Gastrocnemius medialis (tissue), 4 donors: ENCODE measurements at regions of chr9 and their contacts with region 1.

Region 1: GRCh38 chr9:122125158-122125508 is 32.0 kb upstream of the TTLL11 start:
- DNase-seq: peak; percentile 58 to 65
- ATAC-seq: peak; percentile 79 to 81
- H3K4me3 ChIP-seq: no peak overlapping the region
- H3K27ac ChIP-seq: no peak overlapping the region
- H3K4me1 ChIP-seq: peaks cover 0 to 8% of the 10 kb centered on the region in 2 donors
- H3K27me3 ChIP-seq: peaks cover 9 to 18% (median 14%) of the 10 kb centered on the region in 3 donors
- CTCF ChIP-seq: peak; percentile 92 to 97 (median 96)
- POLR2A ChIP-seq: no peak

Region 2: GRCh38 chr9:122070728-122071505 is 54.2 kb before region 1 on chr9:
- in situ Hi-C with region 1: no loop called
- intact Hi-C with region 1: loop called (anchors 2 kb)
- DNase-seq: peak in 1 of 2 donors; percentile 29
- ATAC-seq: peak; percentile 53 to 64
- H3K4me3 ChIP-seq: no peak overlapping the region
- H3K27ac ChIP-seq: peak overlapping the region in 1 of 4 donors; percentile 12
- H3K4me1 ChIP-seq: peaks cover 54 to 83% of the 10 kb centered on the region in 2 donors
- H3K27me3 ChIP-seq: no peaks in the 10 kb centered on the region
- CTCF ChIP-seq: peak in 1 of 5 experiments; percentile 20
- POLR2A ChIP-seq: no peak

Region 3: DNA sequence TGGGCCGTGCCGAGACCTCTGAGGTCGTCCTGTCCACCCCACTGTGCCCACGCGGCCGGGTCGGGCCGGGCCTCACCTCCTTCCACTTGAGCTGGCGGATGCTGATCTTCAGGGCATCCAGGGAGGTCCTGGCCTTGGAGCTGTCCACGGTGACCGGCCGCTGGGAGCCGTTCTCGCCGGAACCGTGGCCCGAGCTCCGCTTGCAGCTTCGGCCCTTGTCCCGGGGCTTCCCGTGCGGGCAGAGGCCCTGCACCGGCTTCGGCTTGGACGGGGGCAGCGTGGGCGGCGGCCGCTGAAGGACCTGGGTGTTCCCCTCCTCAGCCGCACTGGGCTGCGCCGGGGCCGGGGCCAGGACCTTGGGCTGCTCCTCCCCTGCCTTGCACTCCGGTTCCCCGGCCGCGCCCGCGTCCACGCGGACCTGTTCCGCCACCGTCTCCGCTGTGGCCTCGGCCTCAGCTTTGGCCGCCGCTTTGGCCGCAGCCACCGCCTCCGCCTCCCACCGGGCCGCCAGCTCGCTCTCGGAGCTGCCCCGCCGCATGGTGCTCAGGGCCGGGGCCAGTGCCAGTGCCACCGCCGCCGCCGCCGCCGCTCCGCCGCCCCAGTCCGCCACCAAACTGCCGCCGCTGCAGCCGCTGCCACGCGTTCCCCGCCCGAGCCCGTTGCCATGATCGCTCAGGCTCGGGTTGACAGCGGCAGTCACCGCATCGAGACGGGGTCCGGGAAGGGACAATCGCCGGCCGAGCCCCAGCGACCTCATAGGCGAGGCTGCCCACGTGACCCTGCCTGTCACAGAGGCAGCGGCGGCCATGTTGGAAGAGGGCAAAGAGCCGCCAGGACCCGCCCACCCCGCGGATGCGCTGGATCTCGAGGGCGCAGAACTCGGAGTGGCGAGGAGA is 32.3 kb before region 1 on chr9 and contains the start of gene TTLL11:
- in situ Hi-C with region 1: no loop called
- intact Hi-C with region 1: no loop called
- DNase-seq: peak; percentile 96
- ATAC-seq: peak; percentile 83 to 88
- H3K4me3 ChIP-seq: peak within 1 kb of the TSS; percentile 69 to 91 (median 78)
- H3K27ac ChIP-seq: peak within 1 kb of the TSS; percentile 84 to 94 (median 88)
- H3K4me1 ChIP-seq: peaks cover 48 to 63% of the 10 kb centered on the region in 2 donors
- H3K27me3 ChIP-seq: no peaks in the 10 kb centered on the region
- CTCF ChIP-seq: peak in 1 of 5 experiments; percentile 17
- POLR2A ChIP-seq: peak; percentile 85 to 86
- total RNA-seq, gene TTLL11: 12.3 to 20.5 (median 15.3) TPM

Region 4: GRCh38 chr9:122213589-122214413 is 88.7 kb after region 1 on chr9:
- in situ Hi-C with region 1: no loop called
- intact Hi-C with region 1: loop called (anchors 10 kb)
- DNase-seq: peak in 1 of 2 donors; percentile 21
- ATAC-seq: peak in 1 of 2 donors; percentile 33
- H3K4me3 ChIP-seq: peak overlapping the region; percentile 14 to 57 (median 33)
- H3K27ac ChIP-seq: no peak overlapping the region
- H3K4me1 ChIP-seq: peaks cover 6 to 10% of the 10 kb centered on the region in 2 donors
- H3K27me3 ChIP-seq: peaks cover 61 to 71% (median 64%) of the 10 kb centered on the region in 3 donors
- CTCF ChIP-seq: no peak
- POLR2A ChIP-seq: no peak

Region 5: GRCh38 chr9:122350638-122351355 is 225.7 kb after region 1 on chr9:
- in situ Hi-C with region 1: loop called (anchors 5 to 10 kb)
- intact Hi-C with region 1: loop called (anchors 1 kb)
- DNase-seq: peak; percentile 50 to 65
- ATAC-seq: peak; percentile 80 to 88
- H3K4me3 ChIP-seq: no peak overlapping the region
- H3K27ac ChIP-seq: no peak overlapping the region
- H3K4me1 ChIP-seq: peaks cover 0 to 8% of the 10 kb centered on the region in 2 donors
- H3K27me3 ChIP-seq: no peaks in the 10 kb centered on the region
- CTCF ChIP-seq: peak; percentile 92 to 96 (median 96)
- POLR2A ChIP-seq: no peak

Region 6: DNA sequence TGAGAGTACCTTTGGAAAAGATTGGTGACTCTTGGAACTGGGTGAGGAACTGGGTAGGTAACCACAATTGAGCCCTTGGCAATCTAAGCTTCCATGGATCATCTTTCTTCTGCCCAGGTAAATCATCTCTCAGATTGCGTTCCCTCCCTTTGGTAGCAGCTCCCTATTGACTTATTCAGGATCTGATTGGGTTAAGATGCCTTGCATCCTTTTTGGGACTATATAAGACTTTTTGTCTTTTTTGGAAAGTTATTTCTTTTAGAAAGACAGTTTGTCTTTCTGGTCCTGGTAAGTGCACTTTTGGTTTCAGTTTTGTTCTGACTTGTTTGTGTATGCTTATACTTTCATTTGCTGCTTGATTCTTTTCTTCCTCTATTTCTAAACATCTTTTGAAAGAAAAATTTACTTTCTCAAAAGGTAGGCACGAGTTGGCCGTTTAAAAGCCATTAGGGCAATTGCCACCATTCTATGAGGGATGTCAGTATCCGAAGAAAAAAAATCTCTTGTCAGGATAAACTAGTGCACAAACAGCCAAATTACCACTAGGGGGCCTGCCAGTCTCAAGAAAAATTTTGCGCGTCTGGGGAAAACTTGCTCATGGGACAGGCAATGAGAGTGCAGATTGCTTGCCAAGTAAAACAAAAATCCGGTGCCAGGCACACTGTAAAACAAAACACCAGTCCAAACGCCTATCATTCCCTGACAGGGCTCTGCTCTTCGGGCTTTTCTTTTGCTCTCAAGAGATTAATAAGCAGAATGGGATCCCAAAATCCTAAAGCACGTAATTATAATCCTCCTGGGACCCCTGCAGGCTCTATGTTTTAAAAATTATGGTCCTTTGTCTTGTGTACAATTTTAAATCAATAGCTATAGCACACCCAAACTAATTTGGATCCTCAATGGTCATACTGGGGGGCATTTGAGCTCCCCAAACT is 339.8 kb after region 1 on chr9:
- in situ Hi-C with region 1: loop called in 1 of 4 experiments (anchors 25 kb)
- intact Hi-C with region 1: no loop called
- DNase-seq: peak; percentile 43 to 52
- ATAC-seq: peak; percentile 82 to 97
- H3K4me3 ChIP-seq: peak overlapping the region; percentile 26 to 62 (median 36)
- H3K27ac ChIP-seq: no peak overlapping the region
- H3K4me1 ChIP-seq: peaks cover 5 to 9% of the 10 kb centered on the region in 2 donors
- H3K27me3 ChIP-seq: peaks cover 0 to 3% (median 0%) of the 10 kb centered on the region in 3 donors
- CTCF ChIP-seq: peak; percentile 62 to 80 (median 71)
- POLR2A ChIP-seq: no peak